CD4-positive, alpha-beta memory T cell (primary cell): ENCODE measurements at regions of chr3 and their contacts with region 1.

Region 1: DNA sequence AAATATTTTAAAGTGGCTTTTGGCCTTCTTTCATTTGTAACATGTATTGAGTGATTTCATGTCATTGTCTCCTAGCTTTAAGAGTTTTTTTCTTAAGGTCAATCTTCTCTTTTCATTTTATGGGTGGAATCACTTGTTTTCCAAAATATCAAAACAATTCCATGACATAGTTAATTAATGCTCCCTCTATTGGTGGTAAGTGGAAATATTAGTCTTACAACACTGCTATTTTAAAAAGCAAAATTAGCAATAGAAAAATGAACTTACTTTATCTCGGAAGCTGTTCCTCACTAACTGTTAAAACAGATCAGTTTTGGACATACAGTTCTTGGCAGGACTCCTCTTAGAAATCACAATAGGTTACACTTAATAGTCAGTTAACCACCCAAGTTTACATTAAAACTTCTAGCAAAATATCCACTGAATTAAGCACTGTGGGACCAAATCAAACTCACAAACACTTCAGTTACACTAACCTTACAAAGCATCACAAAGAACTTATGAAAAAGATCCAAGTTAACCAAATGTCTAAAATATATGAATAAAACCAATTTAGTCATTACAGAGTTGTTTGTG is 42.4 kb downstream of the TIGIT start:
- DNase-seq: no peak
- H3K4me3 ChIP-seq: no peak overlapping the region
- H3K4me3 Mint-ChIP-seq: no peak overlapping the region
- H3K27ac ChIP-seq: no peak overlapping the region
- H3K27ac Mint-ChIP-seq: peak overlapping the region in 5 of 7 donors; percentile 17 to 82 (median 41)
- H3K4me1 ChIP-seq: peaks cover 61% of the 10 kb centered on the region
- H3K4me1 Mint-ChIP-seq: peaks cover 37 to 79% (median 57%) of the 10 kb centered on the region in 4 donors
- H3K27me3 ChIP-seq: no peaks in the 10 kb centered on the region
- H3K27me3 Mint-ChIP-seq: no peaks in the 10 kb centered on the region

Region 2: DNA sequence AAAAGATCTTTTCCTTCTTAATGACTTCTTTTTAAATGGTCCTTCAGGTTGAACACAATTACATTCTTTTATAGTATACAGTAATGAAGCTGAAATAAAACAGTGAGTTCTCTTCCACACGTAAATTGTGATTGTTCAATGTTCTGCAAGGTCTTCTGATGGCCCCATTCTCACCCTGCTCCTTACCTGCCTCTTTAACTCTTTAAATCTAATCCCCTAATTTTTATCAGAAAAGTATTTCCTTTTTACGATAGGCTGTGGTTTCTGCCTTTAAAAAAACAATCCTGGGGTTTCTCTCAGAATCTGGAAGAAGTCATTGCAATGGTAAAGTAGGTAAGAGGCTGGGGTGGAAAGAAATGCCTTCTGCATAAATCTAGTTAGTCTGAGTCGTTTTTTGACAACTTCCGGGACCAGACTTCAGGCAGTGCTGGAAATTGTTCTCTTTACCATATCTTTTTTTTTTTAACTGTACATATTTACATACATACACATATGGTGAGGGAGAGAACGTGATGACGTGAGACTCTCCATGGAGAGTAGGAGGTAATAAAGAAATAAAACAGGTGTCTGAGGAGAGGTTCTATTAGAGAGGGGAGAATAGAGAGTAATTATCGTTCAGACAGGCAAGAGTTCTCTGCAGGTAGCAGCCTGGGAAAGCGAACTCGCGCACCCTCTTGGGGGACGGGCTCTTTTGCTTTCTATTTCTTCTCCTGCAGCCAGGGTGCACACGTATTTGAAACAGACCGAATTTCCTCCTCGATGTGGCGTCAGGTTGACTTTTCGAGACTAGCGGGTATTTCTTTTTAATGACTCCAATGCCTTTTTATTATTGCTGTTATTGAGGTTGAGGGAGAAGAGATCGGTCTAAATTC is 804.1 kb before region 1 on chr3 and contains the start of gene SIDT1:
- CTCF ChIA-PET with region 1: no interaction called
- POLR2A ChIA-PET with region 1: no interaction called
- intact Hi-C with region 1: loop called (anchors 5 kb)
- DNase-seq: peak; percentile 77 to 84 (median 80)
- H3K4me3 ChIP-seq: peak within 1 kb of the TSS; percentile 79 to 96
- H3K4me3 Mint-ChIP-seq: peak within 1 kb of the TSS; percentile 97 to 100 (median 99)
- H3K27ac ChIP-seq: peak within 1 kb of the TSS; percentile 90
- H3K27ac Mint-ChIP-seq: peak within 1 kb of the TSS; percentile 95 to 100 (median 100)
- H3K4me1 ChIP-seq: peaks cover 45% of the 10 kb centered on the region
- H3K4me1 Mint-ChIP-seq: peaks cover 36 to 55% (median 45%) of the 10 kb centered on the region in 4 donors
- H3K27me3 ChIP-seq: no peaks in the 10 kb centered on the region
- H3K27me3 Mint-ChIP-seq: no peaks in the 10 kb centered on the region
- total RNA-seq, gene SIDT1: 55.0 to 56.1 TPM

Region 3: DNA sequence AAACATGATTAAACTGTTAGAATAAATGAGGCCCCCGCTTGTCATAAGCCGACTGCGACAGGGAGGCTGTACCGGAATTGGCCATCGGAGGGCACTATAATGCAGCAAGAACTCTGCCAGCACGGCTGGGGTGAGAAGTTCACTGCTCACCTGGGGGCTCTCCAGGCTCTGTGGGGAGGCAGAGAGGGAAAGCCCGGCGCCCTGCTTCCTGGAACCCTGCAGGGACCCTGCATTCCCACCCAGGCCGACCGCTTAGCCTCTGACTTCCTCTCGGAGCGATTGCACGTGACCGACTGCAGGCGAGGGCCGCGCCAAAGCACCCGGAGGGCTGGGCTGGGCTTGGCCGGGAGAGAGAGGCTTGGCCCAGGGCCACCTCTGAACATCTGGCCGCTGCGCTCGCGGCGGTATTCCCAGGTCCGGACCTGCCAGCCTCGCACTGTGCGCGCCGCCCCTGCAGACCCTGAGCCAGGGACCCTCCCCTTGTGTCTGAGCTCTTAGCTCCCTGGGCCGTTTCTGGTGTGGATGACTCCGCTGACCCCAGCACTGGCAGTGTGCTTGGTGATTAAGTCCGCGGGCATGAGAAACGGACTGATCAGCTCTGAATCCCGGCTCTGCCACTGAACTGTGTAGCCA is 183.6 kb before region 1 on chr3:
- CTCF ChIA-PET with region 1: interaction called, 12 read pairs
- POLR2A ChIA-PET with region 1: interaction called, 3 read pairs
- intact Hi-C with region 1: loop called (anchors 1 kb)
- DNase-seq: peak; percentile 76 to 81 (median 78)
- H3K4me3 ChIP-seq: peak overlapping the region in 1 of 2 donors; percentile 34
- H3K4me3 Mint-ChIP-seq: peak overlapping the region; percentile 58 to 76 (median 68)
- H3K27ac ChIP-seq: no peak overlapping the region
- H3K27ac Mint-ChIP-seq: peak overlapping the region in 6 of 7 donors; percentile 4 to 79 (median 46)
- H3K4me1 ChIP-seq: peaks cover 6% of the 10 kb centered on the region
- H3K4me1 Mint-ChIP-seq: peaks cover 0 to 6% (median 5%) of the 10 kb centered on the region in 4 donors
- H3K27me3 ChIP-seq: no peaks in the 10 kb centered on the region
- H3K27me3 Mint-ChIP-seq: no peaks in the 10 kb centered on the region

Region 4: GRCh38 chr3:114299421-114299820 is 36.8 kb before region 1 on chr3:
- CTCF ChIA-PET with region 1: interaction called, 48 read pairs
- POLR2A ChIA-PET with region 1: interaction called, 8 read pairs
- intact Hi-C with region 1: no loop called
- DNase-seq: peak in 2 of 5 donors; percentile 28
- H3K4me3 ChIP-seq: peak overlapping the region in 1 of 2 donors; percentile 9
- H3K4me3 Mint-ChIP-seq: peak overlapping the region; percentile 59 to 77 (median 68)
- H3K27ac ChIP-seq: peak overlapping the region; percentile 29
- H3K27ac Mint-ChIP-seq: peak overlapping the region in 6 of 7 donors; percentile 32 to 90 (median 76)
- H3K4me1 ChIP-seq: peaks cover 38% of the 10 kb centered on the region
- H3K4me1 Mint-ChIP-seq: peaks cover 31 to 56% (median 42%) of the 10 kb centered on the region in 4 donors
- H3K27me3 ChIP-seq: no peaks in the 10 kb centered on the region
- H3K27me3 Mint-ChIP-seq: no peaks in the 10 kb centered on the region

Region 5: GRCh38 chr3:114308830-114309229 is 27.4 kb before region 1 on chr3:
- CTCF ChIA-PET with region 1: interaction called, 21 read pairs
- POLR2A ChIA-PET with region 1: interaction called, 8 read pairs
- intact Hi-C with region 1: loop called (anchors 2 kb)
- DNase-seq: peak; percentile 68 to 83 (median 72)
- H3K4me3 ChIP-seq: peak overlapping the region in 1 of 2 donors; percentile 12
- H3K4me3 Mint-ChIP-seq: peak overlapping the region; percentile 37 to 88 (median 68)
- H3K27ac ChIP-seq: peak overlapping the region; percentile 88
- H3K27ac Mint-ChIP-seq: peak overlapping the region; percentile 92 to 98 (median 95)
- H3K4me1 ChIP-seq: peaks cover 72% of the 10 kb centered on the region
- H3K4me1 Mint-ChIP-seq: peaks cover 53 to 66% (median 59%) of the 10 kb centered on the region in 4 donors
- H3K27me3 ChIP-seq: no peaks in the 10 kb centered on the region
- H3K27me3 Mint-ChIP-seq: no peaks in the 10 kb centered on the region

Region 6: GRCh38 chr3:114319453-114319852 is 16.8 kb before region 1 on chr3:
- CTCF ChIA-PET with region 1: interaction called, 14 read pairs
- POLR2A ChIA-PET with region 1: interaction called, 5 read pairs
- intact Hi-C with region 1: loop called (anchors 1 kb)
- DNase-seq: no peak
- H3K4me3 ChIP-seq: no peak overlapping the region
- H3K4me3 Mint-ChIP-seq: peak overlapping the region in 1 of 8 donors; percentile 60
- H3K27ac ChIP-seq: no peak overlapping the region
- H3K27ac Mint-ChIP-seq: peak overlapping the region in 2 of 7 donors; percentile 5 to 43
- H3K4me1 ChIP-seq: peaks cover 83% of the 10 kb centered on the region
- H3K4me1 Mint-ChIP-seq: peaks cover 26 to 67% (median 48%) of the 10 kb centered on the region in 4 donors
- H3K27me3 ChIP-seq: no peaks in the 10 kb centered on the region
- H3K27me3 Mint-ChIP-seq: no peaks in the 10 kb centered on the region

Region 7: DNA sequence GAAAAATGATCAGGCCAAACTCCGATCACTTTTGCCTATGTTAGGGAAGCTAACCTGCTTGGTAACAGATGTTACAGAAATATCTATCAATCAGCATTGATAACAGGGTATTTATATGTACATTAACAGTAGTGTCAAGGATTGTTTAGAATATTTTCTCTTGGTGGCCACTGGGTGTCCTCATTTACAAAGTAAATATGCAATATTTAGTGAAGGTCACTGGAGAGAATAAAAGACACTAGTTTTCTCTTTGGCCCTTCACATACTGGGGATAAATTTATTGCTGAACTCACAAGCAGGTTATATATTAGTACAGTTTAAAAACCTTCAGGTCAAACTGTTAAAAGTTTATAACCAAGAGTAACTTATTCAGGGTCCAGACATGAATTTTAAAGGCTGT is 26.6 kb after region 1 on chr3:
- CTCF ChIA-PET with region 1: no interaction called
- POLR2A ChIA-PET with region 1: no interaction called
- intact Hi-C with region 1: no loop called
- DNase-seq: no peak
- H3K4me3 ChIP-seq: no peak overlapping the region
- H3K4me3 Mint-ChIP-seq: no peak overlapping the region
- H3K27ac ChIP-seq: no peak overlapping the region
- H3K27ac Mint-ChIP-seq: peak overlapping the region in 1 of 7 donors; percentile 4
- H3K4me1 ChIP-seq: no peaks in the 10 kb centered on the region
- H3K4me1 Mint-ChIP-seq: no peaks in the 10 kb centered on the region
- H3K27me3 ChIP-seq: no peaks in the 10 kb centered on the region
- H3K27me3 Mint-ChIP-seq: no peaks in the 10 kb centered on the region